Naive thymus-derived CD4-positive, alpha-beta T cell (primary cell): ENCODE measurements at regions of chr14 and their contacts with region 1.

Region 1: GRCh38 chr14:105086833-105087307 is 21.6 kb upstream of the GPR132 start:
- DNase-seq: peak; percentile 74 to 88 (median 84)
- ATAC-seq: peak; percentile 92
- H3K4me3 ChIP-seq: peak overlapping the region; percentile 63
- H3K4me3 Mint-ChIP-seq: peak overlapping the region; percentile 64 to 83 (median 78)
- H3K27ac ChIP-seq: peak overlapping the region; percentile 55
- H3K27ac Mint-ChIP-seq: peak overlapping the region in 8 of 9 donors; percentile 3 to 84 (median 55)
- H3K4me1 ChIP-seq: peaks cover 4 to 7% of the 10 kb centered on the region in 2 donors
- H3K4me1 Mint-ChIP-seq: peaks cover 8 to 22% (median 13%) of the 10 kb centered on the region in 7 donors
- H3K27me3 ChIP-seq: no peaks in the 10 kb centered on the region
- H3K27me3 Mint-ChIP-seq: peaks cover 0 to 27% (median 0%) of the 10 kb centered on the region in 5 donors

Region 2: GRCh38 chr14:104895786-104896661 is 190.8 kb before region 1 on chr14:
- CTCF ChIA-PET with region 1: no interaction called
- POLR2A ChIA-PET with region 1: no interaction called
- intact Hi-C with region 1: no loop called
- DNase-seq: peak in 1 of 9 donors; percentile 18
- ATAC-seq: no peak
- H3K4me3 ChIP-seq: no peak overlapping the region
- H3K4me3 Mint-ChIP-seq: no peak overlapping the region
- H3K27ac ChIP-seq: no peak overlapping the region
- H3K27ac Mint-ChIP-seq: no peak overlapping the region
- H3K4me1 ChIP-seq: no peaks in the 10 kb centered on the region
- H3K4me1 Mint-ChIP-seq: peaks cover 0 to 4% (median 0%) of the 10 kb centered on the region in 7 donors
- H3K27me3 ChIP-seq: no peaks in the 10 kb centered on the region
- H3K27me3 Mint-ChIP-seq: peaks cover 0 to 6% (median 0%) of the 10 kb centered on the region in 5 donors

Region 3: GRCh38 chr14:105045710-105046326 is 41.1 kb before region 1 on chr14:
- CTCF ChIA-PET with region 1: interaction called, 8 read pairs
- POLR2A ChIA-PET with region 1: interaction called, 9 read pairs
- intact Hi-C with region 1: loop called in 1 of 2 experiments (anchors 1 kb)
- DNase-seq: peak; percentile 83 to 96 (median 89)
- ATAC-seq: peak; percentile 98
- H3K4me3 ChIP-seq: no peak overlapping the region
- H3K4me3 Mint-ChIP-seq: peak overlapping the region in 7 of 10 donors; percentile 16 to 56 (median 44)
- H3K27ac ChIP-seq: peak overlapping the region; percentile 46
- H3K27ac Mint-ChIP-seq: peak overlapping the region; percentile 11 to 92 (median 87)
- H3K4me1 ChIP-seq: peaks cover 0 to 9% of the 10 kb centered on the region in 2 donors
- H3K4me1 Mint-ChIP-seq: peaks cover 5 to 14% (median 10%) of the 10 kb centered on the region in 7 donors
- H3K27me3 ChIP-seq: no peaks in the 10 kb centered on the region
- H3K27me3 Mint-ChIP-seq: peaks cover 0 to 7% (median 0%) of the 10 kb centered on the region in 5 donors

Region 4: DNA sequence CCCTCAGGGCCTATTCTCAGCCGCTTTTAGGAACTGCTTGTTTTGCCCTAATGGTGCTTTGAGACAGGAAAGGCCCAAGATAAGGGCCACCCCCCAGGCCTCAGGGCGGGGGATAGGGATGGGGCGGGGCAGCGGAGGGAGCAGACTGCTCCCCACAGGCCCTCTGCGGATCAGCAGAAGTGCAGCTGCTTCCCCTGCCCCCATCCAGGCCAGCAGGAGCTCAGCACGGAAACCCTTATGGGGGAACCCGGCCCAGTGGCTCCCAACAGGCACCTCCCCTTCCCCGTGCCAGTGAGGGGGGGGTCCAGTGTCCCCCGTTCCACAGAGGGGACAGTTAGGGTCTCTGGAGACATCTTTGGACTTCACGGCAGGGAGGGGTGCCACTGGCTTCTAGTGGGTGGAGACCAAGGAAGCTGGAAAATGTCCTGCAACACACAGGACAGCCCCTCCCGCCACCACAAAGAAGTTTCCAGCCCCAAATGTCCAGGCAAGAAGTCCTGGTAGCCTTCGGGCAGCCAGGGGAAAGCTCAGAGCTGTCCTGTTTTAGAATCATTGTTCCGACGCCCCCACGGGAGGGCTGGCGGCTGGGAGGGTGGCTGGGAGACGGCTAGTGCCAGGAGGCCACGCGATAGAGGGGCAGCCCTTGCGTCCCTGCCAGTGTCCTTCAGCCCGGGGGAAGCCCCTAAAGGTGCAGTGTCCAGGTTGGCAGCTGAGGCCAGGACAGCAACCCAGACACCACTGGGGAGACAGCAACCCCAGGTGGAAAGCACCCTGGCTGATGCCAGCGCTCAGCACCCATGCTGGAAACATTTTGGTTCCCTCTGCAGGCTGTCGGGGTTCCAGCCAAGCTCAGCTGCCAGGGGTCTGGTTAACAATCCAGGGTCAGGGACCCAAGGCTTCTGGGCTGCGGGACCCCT is 11.2 kb before region 1 on chr14:
- CTCF ChIA-PET with region 1: interaction called, 17 read pairs
- POLR2A ChIA-PET with region 1: interaction called, 52 read pairs
- intact Hi-C with region 1: no loop called
- DNase-seq: no peak
- ATAC-seq: peak; percentile 83
- H3K4me3 ChIP-seq: no peak overlapping the region
- H3K4me3 Mint-ChIP-seq: peak overlapping the region in 6 of 10 donors; percentile 13 to 79 (median 44)
- H3K27ac ChIP-seq: no peak overlapping the region
- H3K27ac Mint-ChIP-seq: peak overlapping the region in 3 of 9 donors; percentile 13 to 61 (median 22)
- H3K4me1 ChIP-seq: peaks cover 20 to 29% of the 10 kb centered on the region in 2 donors
- H3K4me1 Mint-ChIP-seq: peaks cover 15 to 41% (median 32%) of the 10 kb centered on the region in 7 donors
- H3K27me3 ChIP-seq: no peaks in the 10 kb centered on the region
- H3K27me3 Mint-ChIP-seq: peaks cover 0 to 11% (median 0%) of the 10 kb centered on the region in 5 donors

Region 5: DNA sequence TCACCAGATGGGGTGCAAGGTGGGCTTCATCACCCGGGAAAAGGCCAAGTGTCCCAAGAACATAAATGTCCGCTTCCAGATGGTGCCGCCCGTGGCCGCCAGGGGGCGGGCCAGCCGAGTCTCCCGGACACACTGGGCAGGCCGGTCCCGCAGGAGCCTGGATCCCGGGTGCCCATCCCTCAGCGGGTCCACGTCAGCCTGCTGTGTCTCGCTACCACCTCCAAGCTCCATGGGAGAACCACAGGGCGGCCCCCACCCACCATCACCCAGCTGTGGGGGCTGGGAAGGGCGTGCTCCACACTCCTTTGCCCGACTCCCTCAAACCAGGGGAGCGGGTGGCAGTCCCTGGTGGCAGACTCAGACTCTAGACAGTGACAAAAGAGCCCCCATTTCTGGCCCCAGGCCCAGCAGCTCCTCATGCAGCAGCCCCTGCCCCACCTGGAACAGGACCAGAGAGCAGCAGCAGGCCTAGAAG is 116.2 kb after region 1 on chr14:
- CTCF ChIA-PET with region 1: no interaction called
- POLR2A ChIA-PET with region 1: no interaction called
- intact Hi-C with region 1: loop called (anchors 2 to 5 kb)
- DNase-seq: peak in 6 of 9 donors; percentile 30 to 75 (median 58)
- ATAC-seq: peak; percentile 58
- H3K4me3 ChIP-seq: no peak overlapping the region
- H3K4me3 Mint-ChIP-seq: no peak overlapping the region
- H3K27ac ChIP-seq: no peak overlapping the region
- H3K27ac Mint-ChIP-seq: no peak overlapping the region
- H3K4me1 ChIP-seq: peaks cover 0 to 18% of the 10 kb centered on the region in 2 donors
- H3K4me1 Mint-ChIP-seq: peaks cover 9 to 15% (median 13%) of the 10 kb centered on the region in 7 donors
- H3K27me3 ChIP-seq: peaks cover 0 to 2% of the 10 kb centered on the region in 2 donors
- H3K27me3 Mint-ChIP-seq: peaks cover 6 to 26% (median 12%) of the 10 kb centered on the region in 5 donors

Region 6: GRCh38 chr14:105351920-105352851 is 265.3 kb after region 1 on chr14:
- CTCF ChIA-PET with region 1: interaction called, 17 read pairs
- POLR2A ChIA-PET with region 1: interaction called, 3 read pairs
- intact Hi-C with region 1: loop called in 1 of 2 experiments (anchors 1 kb)
- DNase-seq: peak; percentile 71 to 90 (median 87)
- ATAC-seq: peak; percentile 97
- H3K4me3 ChIP-seq: no peak overlapping the region
- H3K4me3 Mint-ChIP-seq: no peak overlapping the region
- H3K27ac ChIP-seq: no peak overlapping the region
- H3K27ac Mint-ChIP-seq: peak overlapping the region in 1 of 9 donors; percentile 56
- H3K4me1 ChIP-seq: peaks cover 0 to 4% of the 10 kb centered on the region in 2 donors
- H3K4me1 Mint-ChIP-seq: peaks cover 4 to 5% (median 4%) of the 10 kb centered on the region in 7 donors
- H3K27me3 ChIP-seq: no peaks in the 10 kb centered on the region
- H3K27me3 Mint-ChIP-seq: no peaks in the 10 kb centered on the region